Left ventricle myocardium superior (tissue), 1 donor: ENCODE measurements at regions of chr2 and their contacts with region 1.

Region 1: GRCh38 chr2:54176577-54176976 is 61.2 kb downstream of the ACYP2 start:
- DNase-seq: peak; percentile 62
- ATAC-seq: peak; percentile 83

Region 2: DNA sequence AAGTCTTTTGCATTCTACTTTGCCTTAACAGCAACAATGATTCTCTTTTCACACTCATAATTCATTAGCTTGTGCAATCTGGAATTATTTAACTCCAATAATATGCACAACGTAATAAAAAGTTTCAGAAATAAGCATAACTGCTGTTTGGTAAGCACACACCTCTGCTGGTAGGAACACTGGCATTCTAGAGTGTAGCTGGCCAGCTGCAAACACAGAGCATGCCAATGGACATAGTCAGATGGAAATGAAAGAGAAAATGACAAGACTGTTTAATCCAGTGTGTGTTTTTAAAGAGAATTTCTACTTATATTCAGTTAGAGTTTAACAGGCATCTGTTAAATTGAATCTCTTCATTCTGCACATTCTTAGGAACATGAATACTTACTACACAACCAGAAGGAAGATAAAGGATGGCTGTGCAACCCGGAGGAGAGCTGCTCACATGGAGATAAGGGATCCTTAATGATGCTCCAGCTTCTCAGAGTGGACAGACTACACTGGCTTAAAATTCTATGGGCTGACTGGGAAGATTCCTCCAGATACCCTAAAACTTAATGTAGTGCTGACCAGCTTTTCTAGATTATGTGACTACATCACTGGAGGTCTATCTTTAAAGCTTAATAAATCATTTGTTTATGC is 503.6 kb before region 1 on chr2:
- intact Hi-C with region 1: no loop called
- DNase-seq: no peak
- ATAC-seq: no peak

Region 3: GRCh38 chr2:54845514-54845913 is 668.9 kb after region 1 on chr2:
- intact Hi-C with region 1: loop called (anchors 10 kb)
- DNase-seq: no peak
- ATAC-seq: no peak